A673 (cell line): ENCODE measurements at regions of chr7 and their contacts with region 1.

Region 1: GRCh38 chr7:150898475-150899011 is 46.2 kb downstream of the AOC1 start:
- DNase-seq: peak; percentile 72
- H3K4me3 ChIP-seq: no peak overlapping the region
- H3K27ac ChIP-seq: no peak overlapping the region
- H3K4me1 ChIP-seq: peaks cover 6% of the 10 kb centered on the region
- H3K27me3 ChIP-seq: no peaks in the 10 kb centered on the region
- CTCF ChIP-seq: peak; percentile 98

Region 2: GRCh38 chr7:150003304-150003810 is 895.2 kb before region 1 on chr7:
- CTCF ChIA-PET with region 1: no interaction called
- POLR2A ChIA-PET with region 1: no interaction called
- intact Hi-C with region 1: no loop called
- DNase-seq: no peak
- H3K4me3 ChIP-seq: no peak overlapping the region
- H3K27ac ChIP-seq: no peak overlapping the region
- H3K4me1 ChIP-seq: no peaks in the 10 kb centered on the region
- H3K27me3 ChIP-seq: no peaks in the 10 kb centered on the region
- CTCF ChIP-seq: no peak

Region 3: GRCh38 chr7:150520145-150520544 is 378.4 kb before region 1 on chr7:
- CTCF ChIA-PET with region 1: no interaction called
- POLR2A ChIA-PET with region 1: no interaction called
- intact Hi-C with region 1: no loop called
- DNase-seq: no peak
- H3K4me3 ChIP-seq: no peak overlapping the region
- H3K27ac ChIP-seq: no peak overlapping the region
- H3K4me1 ChIP-seq: no peaks in the 10 kb centered on the region
- H3K27me3 ChIP-seq: peaks cover 8% of the 10 kb centered on the region
- CTCF ChIP-seq: no peak

Region 4: GRCh38 chr7:150988230-150989226 is 90.0 kb after region 1 on chr7:
- CTCF ChIA-PET with region 1: no interaction called
- POLR2A ChIA-PET with region 1: no interaction called
- intact Hi-C with region 1: loop called (anchors 1 kb)
- DNase-seq: peak; percentile 81
- H3K4me3 ChIP-seq: no peak overlapping the region
- H3K27ac ChIP-seq: no peak overlapping the region
- H3K4me1 ChIP-seq: no peaks in the 10 kb centered on the region
- H3K27me3 ChIP-seq: no peaks in the 10 kb centered on the region
- CTCF ChIP-seq: peak; percentile 89